ENCODE measurements at regions of chr12 and their contacts with region 1.

Region 1: GRCh38 chr12:107093417-107094182 is at the start of gene CRY1:
- DNase-seq: peak; percentile 98
- H3K4me3 ChIP-seq: peak within 1 kb of the TSS; percentile 56 to 78 (median 71)
- H3K27ac ChIP-seq: peak within 1 kb of the TSS; percentile 94
- H3K4me1 ChIP-seq: peaks cover 20% of the 10 kb centered on the region
- H3K27me3 ChIP-seq: no peaks in the 10 kb centered on the region
- CTCF ChIP-seq: no peak
- POLR2A ChIP-seq: peak; percentile 69
- total RNA-seq, gene CRY1: 21.0 and 24.1 TPM in 2 replicates

Region 2: DNA sequence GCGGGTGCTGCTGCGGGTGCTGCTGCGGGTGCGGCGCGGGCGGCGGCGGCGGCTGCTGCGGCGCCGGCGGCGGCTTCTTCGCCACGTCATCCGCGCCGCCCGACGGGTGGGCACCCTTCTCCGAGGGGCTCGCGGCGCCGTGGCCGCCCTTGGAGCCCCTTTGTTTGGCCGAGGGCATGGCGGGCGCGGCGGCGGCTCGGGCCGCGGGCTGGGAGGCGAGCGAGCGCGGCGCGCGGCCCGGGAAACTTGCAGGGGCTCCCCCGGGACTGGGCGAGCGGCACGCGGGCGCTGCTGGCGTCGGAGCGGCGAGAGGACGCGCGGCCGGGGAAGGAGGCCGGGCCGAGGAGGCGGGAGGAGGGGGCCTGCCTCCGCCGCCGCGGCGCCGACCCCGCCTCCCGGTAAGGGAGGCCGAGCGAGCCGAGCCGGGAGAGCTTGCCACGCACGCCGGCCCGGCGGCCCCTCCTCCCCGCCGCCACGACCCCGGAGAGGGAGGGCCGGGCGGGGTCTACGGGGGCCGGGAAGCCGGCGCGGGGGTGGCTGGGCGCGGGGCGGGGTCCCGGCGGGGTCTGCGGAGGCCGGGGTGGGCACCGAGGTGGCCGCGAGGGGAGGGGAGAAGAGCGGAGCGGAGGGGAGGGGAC is 845.8 kb before region 1 on chr12 and contains the start of gene CKAP4:
- CTCF ChIA-PET with region 1: no interaction called
- POLR2A ChIA-PET with region 1: no interaction called
- dilution Hi-C with region 1: no loop called
- intact Hi-C with region 1: loop called (anchors 5 kb)
- DNase-seq: peak; percentile 74
- H3K4me3 ChIP-seq: peak within 1 kb of the TSS; percentile 72 to 97 (median 90)
- H3K27ac ChIP-seq: peak within 1 kb of the TSS; percentile 90
- H3K4me1 ChIP-seq: peaks cover 27% of the 10 kb centered on the region
- H3K27me3 ChIP-seq: no peaks in the 10 kb centered on the region
- CTCF ChIP-seq: no peak
- POLR2A ChIP-seq: no peak
- total RNA-seq, gene CKAP4: 223 and 249 TPM in 2 replicates

Region 3: DNA sequence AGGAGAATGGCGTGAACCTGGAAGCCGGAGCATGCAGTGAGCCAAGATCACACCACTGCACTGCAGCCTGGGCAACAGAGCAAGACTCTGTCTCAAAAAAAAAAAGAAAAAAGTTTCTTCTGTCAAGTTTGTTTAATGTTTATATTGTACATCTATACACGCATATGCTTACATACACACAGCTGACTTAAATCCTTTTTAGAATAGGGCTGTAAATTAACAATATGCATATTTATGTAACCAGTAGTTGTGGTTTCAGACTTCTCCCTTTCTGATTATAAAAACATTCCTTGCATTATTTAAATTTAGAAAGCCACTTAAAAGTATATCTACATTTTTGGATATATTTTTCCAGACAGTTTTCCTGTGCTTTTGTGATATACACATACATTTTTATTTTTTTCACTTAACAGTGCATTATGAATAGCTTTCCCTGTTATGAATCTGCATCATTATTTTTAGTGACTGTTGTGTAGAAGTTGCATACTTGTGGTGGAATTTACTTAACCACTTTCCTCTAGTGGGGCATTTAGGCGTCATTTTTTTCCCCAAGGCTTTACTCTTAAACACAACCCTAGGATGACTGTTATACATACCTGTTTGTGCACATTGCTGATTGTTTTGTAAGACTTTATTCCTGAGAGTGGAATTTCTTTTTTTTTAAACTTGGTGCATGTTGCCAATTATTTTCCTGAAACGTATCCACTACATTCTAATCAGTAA is 706.6 kb before region 1 on chr12:
- CTCF ChIA-PET with region 1: no interaction called
- POLR2A ChIA-PET with region 1: no interaction called
- dilution Hi-C with region 1: no loop called
- intact Hi-C with region 1: loop called (anchors 5 kb)
- DNase-seq: no peak
- H3K4me3 ChIP-seq: no peak overlapping the region
- H3K27ac ChIP-seq: no peak overlapping the region
- H3K4me1 ChIP-seq: no peaks in the 10 kb centered on the region
- H3K27me3 ChIP-seq: no peaks in the 10 kb centered on the region
- CTCF ChIP-seq: no peak
- POLR2A ChIP-seq: no peak

Region 4: GRCh38 chr12:106986625-106987430 is 106.8 kb before region 1 on chr12 and contains the start of gene MTERF2:
- CTCF ChIA-PET with region 1: interaction called, 7 read pairs
- POLR2A ChIA-PET with region 1: interaction called, 3 read pairs
- dilution Hi-C with region 1: no loop called
- intact Hi-C with region 1: loop called (anchors 1 kb)
- DNase-seq: peak; percentile 97
- H3K4me3 ChIP-seq: peak within 1 kb of the TSS; percentile 62 to 79 (median 78)
- H3K27ac ChIP-seq: peak within 1 kb of the TSS; percentile 68
- H3K4me1 ChIP-seq: peaks cover 16% of the 10 kb centered on the region
- H3K27me3 ChIP-seq: no peaks in the 10 kb centered on the region
- CTCF ChIP-seq: no peak
- POLR2A ChIP-seq: peak; percentile 54
- total RNA-seq, gene MTERF2: 6.7 and 9.6 TPM in 2 replicates

Region 5: GRCh38 chr12:107105410-107105703 is 11.8 kb after region 1 on chr12:
- CTCF ChIA-PET with region 1: interaction called, 109 read pairs
- POLR2A ChIA-PET with region 1: interaction called, 5 read pairs
- dilution Hi-C with region 1: no loop called
- intact Hi-C with region 1: loop called (anchors 1 kb)
- DNase-seq: no peak
- H3K4me3 ChIP-seq: no peak overlapping the region
- H3K27ac ChIP-seq: no peak overlapping the region
- H3K4me1 ChIP-seq: peaks cover 3% of the 10 kb centered on the region
- H3K27me3 ChIP-seq: peaks cover 12 to 19% of the 10 kb centered on the region in 2 experiments
- CTCF ChIP-seq: no peak
- POLR2A ChIP-seq: no peak

Region 6: DNA sequence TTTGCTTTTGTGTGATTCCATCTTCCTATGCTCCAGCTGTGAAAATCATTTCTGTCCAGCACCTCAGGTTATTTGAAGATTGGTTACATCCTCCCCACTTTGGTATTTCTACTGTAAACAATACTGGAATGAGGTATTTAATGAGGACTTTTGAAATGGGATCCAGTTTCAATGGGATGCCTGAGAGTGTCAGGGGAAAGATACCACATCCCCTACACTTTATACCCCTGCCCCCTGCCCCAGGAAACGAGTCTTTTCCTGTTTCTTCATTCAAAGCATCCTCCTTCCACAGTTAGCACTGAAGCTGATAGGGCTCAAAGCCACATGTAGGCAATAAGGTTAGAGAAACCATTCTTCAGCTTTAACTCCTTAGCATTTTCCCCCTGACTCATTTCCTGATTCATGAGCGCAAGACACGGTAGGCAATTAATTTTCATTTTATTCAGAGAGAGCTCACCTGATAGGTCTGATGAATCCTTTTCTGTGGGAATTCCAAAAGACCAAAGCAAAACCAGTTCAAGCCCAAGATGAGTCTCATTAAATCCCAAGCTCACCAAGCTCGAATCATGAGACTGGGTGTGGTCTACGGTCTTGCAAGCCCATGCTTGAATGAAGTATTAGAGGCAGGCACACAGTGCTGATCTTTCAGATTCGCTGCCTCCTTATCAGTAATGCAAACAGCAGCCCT is 143.4 kb after region 1 on chr12:
- CTCF ChIA-PET with region 1: no interaction called
- POLR2A ChIA-PET with region 1: no interaction called
- dilution Hi-C with region 1: no loop called
- intact Hi-C with region 1: no loop called
- DNase-seq: peak; percentile 37
- H3K4me3 ChIP-seq: no peak overlapping the region
- H3K27ac ChIP-seq: no peak overlapping the region
- H3K4me1 ChIP-seq: peaks cover 12% of the 10 kb centered on the region
- H3K27me3 ChIP-seq: peaks cover 3% of the 10 kb centered on the region in 2 experiments
- CTCF ChIP-seq: no peak
- POLR2A ChIP-seq: no peak

Region 7: DNA sequence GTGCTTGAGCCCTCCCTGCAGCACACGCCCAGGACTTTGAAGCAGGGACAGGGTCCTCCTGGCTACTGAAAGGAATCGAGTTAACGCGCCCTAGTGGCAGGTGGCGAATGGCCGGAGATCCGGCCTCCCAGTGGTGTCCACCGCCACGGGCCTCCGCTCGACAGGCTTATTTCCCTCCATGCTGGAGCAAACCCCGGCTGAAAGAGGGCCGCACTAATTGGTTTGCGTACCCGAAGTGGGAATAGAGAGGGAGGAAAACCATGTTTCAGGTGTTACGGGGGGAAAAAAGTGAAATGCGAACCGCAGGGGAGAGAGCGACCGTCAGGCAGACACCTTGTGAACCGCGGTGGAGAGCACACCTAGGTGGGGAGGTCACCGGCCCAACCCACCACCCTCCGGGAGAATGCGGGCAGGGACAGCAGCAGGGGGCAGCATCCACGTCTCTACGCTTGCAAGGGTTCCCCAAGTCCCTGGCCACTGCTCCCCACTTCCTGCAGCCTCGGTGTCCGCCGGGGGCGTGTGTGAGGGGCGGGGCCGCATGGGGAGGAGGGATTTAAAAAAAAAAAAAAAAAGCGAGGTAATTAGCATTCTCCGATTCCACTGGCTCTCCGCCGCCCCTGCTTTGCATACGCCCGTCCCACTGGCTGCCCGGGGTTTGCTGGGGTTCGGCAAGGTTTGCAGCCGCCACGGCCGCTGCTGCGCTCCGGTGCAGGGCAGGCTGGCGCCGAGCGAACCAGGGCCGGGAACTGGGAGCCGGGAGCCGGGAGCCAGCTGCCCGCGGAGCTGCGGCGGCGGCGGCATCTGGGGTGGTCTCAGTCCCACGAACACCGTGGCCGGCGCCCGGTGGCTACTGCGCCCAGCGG is 224.4 kb after region 1 on chr12:
- CTCF ChIA-PET with region 1: no interaction called
- POLR2A ChIA-PET with region 1: no interaction called
- dilution Hi-C with region 1: no loop called
- intact Hi-C with region 1: no loop called
- DNase-seq: peak; percentile 81
- H3K4me3 ChIP-seq: peak overlapping the region; percentile 29 to 41 (median 30)
- H3K27ac ChIP-seq: no peak overlapping the region
- H3K4me1 ChIP-seq: peaks cover 20% of the 10 kb centered on the region
- H3K27me3 ChIP-seq: peaks cover 36 to 48% of the 10 kb centered on the region in 2 experiments
- CTCF ChIP-seq: peak in 1 of 2 donors; percentile 1
- POLR2A ChIP-seq: no peak

Region 8: GRCh38 chr12:107760809-107761501 is 667.4 kb after region 1 on chr12 and contains the start of gene PRDM4:
- CTCF ChIA-PET with region 1: no interaction called
- POLR2A ChIA-PET with region 1: interaction called, 3 read pairs
- dilution Hi-C with region 1: no loop called
- intact Hi-C with region 1: loop called (anchors 2 kb)
- DNase-seq: peak; percentile 96
- H3K4me3 ChIP-seq: peak within 1 kb of the TSS; percentile 52 to 88 (median 71)
- H3K27ac ChIP-seq: peak within 1 kb of the TSS; percentile 74
- H3K4me1 ChIP-seq: peaks cover 27% of the 10 kb centered on the region
- H3K27me3 ChIP-seq: peaks cover 1 to 8% of the 10 kb centered on the region in 2 experiments
- CTCF ChIP-seq: peak in 1 of 2 donors; percentile 22
- POLR2A ChIP-seq: peak; percentile 85
- total RNA-seq, gene PRDM4: 33.4 and 36.8 TPM in 2 replicates

Measured in endothelial cell of umbilical vein (primary cell).